BJ (cell line): ENCODE measurements at regions of chr1 and their contacts with region 1.

Region 1: GRCh38 chr1:186315570-186315969 is 59.5 kb downstream of the TPR start:
- DNase-seq: no peak
- H3K4me3 ChIP-seq: no peak overlapping the region
- H3K27me3 ChIP-seq: no peaks in the 10 kb centered on the region
- CTCF ChIP-seq: no peak

Region 2: GRCh38 chr1:186218654-186219352 is 96.8 kb before region 1 on chr1:
- CTCF ChIA-PET with region 1: no interaction called
- POLR2A ChIA-PET with region 1: no interaction called
- DNase-seq: no peak
- H3K4me3 ChIP-seq: no peak overlapping the region
- H3K27me3 ChIP-seq: no peaks in the 10 kb centered on the region
- CTCF ChIP-seq: no peak

Region 3: GRCh38 chr1:186330758-186331157 is 15.2 kb after region 1 on chr1:
- CTCF ChIA-PET with region 1: interaction called, 14 read pairs
- POLR2A ChIA-PET with region 1: no interaction called
- DNase-seq: no peak
- H3K4me3 ChIP-seq: no peak overlapping the region
- H3K27me3 ChIP-seq: no peaks in the 10 kb centered on the region
- CTCF ChIP-seq: peak; percentile 45